ENCODE measurements at regions of chr15 and their contacts with region 1.

Region 1: GRCh38 chr15:90648137-90649070 is 68.7 kb upstream of the BLM start:
- DNase-seq: peak; percentile 82
- H3K4me3 Mint-ChIP-seq: peak overlapping the region; percentile 58
- H3K27ac Mint-ChIP-seq: peak overlapping the region; percentile 91
- H3K4me1 Mint-ChIP-seq: peaks cover 30% of the 10 kb centered on the region
- H3K27me3 Mint-ChIP-seq: peaks cover 4% of the 10 kb centered on the region

Region 2: GRCh38 chr15:90665288-90666134 is 17.1 kb after region 1 on chr15:
- CTCF ChIA-PET with region 1: interaction called, 4 read pairs
- intact Hi-C with region 1: loop called (anchors 2 kb)
- DNase-seq: peak; percentile 58
- H3K4me3 Mint-ChIP-seq: peak overlapping the region; percentile 72
- H3K27ac Mint-ChIP-seq: peak overlapping the region; percentile 31
- H3K4me1 Mint-ChIP-seq: peaks cover 42% of the 10 kb centered on the region
- H3K27me3 Mint-ChIP-seq: peaks cover 13% of the 10 kb centered on the region

Region 3: GRCh38 chr15:90677807-90678790 is 29.7 kb after region 1 on chr15:
- CTCF ChIA-PET with region 1: interaction called, 23 read pairs
- intact Hi-C with region 1: loop called (anchors 1 kb)
- DNase-seq: peak; percentile 52
- H3K4me3 Mint-ChIP-seq: peak overlapping the region; percentile 30
- H3K27ac Mint-ChIP-seq: peak overlapping the region; percentile 78
- H3K4me1 Mint-ChIP-seq: peaks cover 36% of the 10 kb centered on the region
- H3K27me3 Mint-ChIP-seq: no peaks in the 10 kb centered on the region

Region 4: GRCh38 chr15:90691982-90692773 is 43.8 kb after region 1 on chr15:
- CTCF ChIA-PET with region 1: interaction called, 18 read pairs
- intact Hi-C with region 1: loop called (anchors 1 kb)
- DNase-seq: no peak
- H3K4me3 Mint-ChIP-seq: no peak overlapping the region
- H3K27ac Mint-ChIP-seq: no peak overlapping the region
- H3K4me1 Mint-ChIP-seq: peaks cover 4% of the 10 kb centered on the region
- H3K27me3 Mint-ChIP-seq: no peaks in the 10 kb centered on the region

Region 5: DNA sequence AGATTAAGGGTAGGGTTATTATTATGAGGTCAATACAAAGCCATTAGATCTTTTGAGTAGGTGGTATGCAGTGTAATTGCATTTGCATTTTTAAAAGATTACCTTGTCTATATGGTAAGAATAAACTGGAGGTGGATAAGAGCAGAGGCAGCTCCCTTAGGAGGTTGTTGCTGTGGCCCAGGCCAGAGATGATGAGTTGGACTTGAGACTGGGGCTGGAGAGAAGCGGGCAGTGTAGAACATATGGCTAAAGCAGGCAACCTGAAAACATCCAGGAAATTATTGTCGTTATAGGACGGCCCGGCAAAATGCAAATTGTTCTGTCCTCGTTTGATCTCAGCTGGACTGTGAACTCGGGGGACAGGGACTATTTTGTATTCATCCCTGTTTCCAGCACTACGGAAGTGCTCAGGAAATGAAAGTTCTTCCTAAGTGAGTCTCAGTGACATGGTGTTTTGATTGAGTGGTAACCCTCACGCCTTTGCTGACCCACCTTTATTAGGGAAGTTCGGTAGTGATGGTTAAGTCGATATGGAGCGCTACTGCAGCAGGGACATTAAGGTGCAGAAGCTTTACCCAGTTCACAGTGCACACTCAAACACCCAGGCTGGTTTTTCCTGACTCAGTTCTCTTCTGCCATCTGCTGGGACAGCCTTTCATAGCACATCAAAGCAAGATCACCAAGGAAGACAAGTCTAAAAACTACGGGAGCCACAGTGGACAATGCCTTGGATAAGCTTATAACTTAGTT is 401.1 kb after region 1 on chr15:
- CTCF ChIA-PET with region 1: no interaction called
- intact Hi-C with region 1: loop called (anchors 1 kb)
- DNase-seq: peak; percentile 83
- H3K4me3 Mint-ChIP-seq: no peak overlapping the region
- H3K27ac Mint-ChIP-seq: no peak overlapping the region
- H3K4me1 Mint-ChIP-seq: peaks cover 19% of the 10 kb centered on the region
- H3K27me3 Mint-ChIP-seq: no peaks in the 10 kb centered on the region